GM18951 (cell line): ENCODE measurements at regions of chr2 and their contacts with region 1.

Region 1: DNA sequence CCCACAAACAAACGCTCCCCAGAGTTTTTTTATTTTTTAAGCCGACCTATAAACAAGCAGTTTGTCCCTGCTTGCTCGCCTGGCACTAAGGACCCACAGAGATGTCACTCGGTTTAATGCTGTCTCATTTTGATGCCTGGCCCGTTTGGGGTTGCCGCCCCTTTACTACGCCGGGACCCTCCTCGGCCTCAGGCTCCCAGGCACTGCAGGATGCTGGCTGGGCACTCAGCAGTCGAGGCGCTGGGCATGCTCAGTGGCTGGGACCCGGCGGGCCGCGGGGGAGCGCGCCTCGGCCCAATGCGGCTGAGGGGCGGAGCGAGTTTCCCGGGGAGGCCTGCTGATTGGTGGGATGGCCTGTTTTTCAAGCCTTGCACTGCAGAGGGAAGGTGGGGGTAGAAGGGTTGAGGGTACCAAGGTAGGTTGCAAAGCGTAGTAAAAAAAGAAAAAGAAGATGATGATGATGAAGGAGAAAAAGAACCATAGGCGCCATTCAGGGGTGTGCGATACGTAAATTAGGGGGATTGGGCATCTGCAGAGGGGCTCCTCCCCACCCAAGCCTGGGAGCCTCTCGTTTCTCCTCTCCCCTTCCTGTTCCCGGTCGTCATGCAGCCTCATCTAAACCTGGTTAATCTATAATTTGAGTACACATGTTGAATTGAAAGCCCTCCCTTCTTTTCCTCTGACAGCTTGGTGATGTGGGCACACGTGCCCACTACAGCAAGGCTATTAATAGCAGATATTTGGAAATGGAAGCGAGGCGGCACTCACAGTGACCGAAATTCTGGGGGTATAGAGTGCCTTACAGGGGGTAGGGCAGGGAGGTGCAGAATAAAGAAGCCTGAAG is 1.5 kb upstream of the IRS1 start:
- POLR2A ChIP-seq: peak; percentile 68

Region 2: GRCh38 chr2:225660262-225661131 is 1140.7 kb before region 1 on chr2:
- in situ Hi-C with region 1: loop called (anchors 25 kb)
- POLR2A ChIP-seq: no peak

Region 3: DNA sequence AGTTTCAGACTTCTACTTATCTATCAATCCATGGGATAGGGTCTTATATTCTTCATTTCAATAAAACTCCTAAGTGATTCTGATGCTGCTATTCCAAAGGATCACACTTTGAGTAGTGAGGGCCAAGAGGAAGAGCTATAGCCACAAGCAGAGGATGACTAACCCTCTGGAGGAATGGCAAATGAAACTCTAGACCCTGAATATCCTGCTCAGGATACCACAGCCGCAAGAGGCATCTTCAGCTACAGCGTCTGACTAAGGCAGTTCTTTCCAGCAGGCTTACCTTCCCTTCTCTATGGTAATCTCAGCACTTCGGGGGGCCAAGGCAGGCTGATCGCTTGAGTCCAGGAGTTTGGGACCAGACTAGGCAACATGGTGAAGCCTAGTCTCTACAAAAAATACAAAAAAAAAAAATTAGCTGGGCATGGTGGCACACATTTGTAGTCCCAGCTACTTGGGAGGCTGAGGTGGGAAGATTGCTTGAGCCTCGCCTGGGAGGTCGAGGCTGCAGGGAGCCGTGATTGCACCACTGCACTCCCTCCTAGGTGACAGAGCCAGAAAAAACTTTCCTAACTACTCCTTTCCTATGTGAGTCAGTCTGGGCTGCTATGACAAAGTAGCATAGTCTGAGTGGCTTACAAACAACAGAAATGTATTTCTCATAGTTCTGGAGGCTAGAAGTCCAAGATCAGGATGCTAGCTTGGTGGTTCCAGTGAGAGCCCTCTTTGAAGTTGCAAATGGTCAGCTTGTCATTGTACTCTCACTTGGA is 373.4 kb before region 1 on chr2:
- in situ Hi-C with region 1: no loop called
- POLR2A ChIP-seq: no peak

Region 4: DNA sequence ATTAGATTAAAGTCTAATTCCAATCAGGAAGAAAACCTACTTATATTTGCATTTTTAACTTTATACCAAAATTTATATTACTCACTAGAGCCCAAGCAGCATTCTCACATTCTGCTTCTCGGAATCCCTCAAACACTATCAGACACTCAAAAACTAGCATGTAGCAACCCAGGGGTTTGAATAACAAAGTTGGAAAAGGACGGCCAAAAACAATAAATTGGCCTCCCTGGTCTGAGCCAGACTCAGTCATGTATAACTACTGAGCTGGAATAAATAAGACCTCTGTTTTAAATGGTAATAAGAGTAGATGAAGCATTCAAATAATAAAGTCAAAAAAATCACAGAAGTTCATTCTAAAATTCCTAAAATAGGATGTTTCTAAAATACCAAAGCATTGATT is 292.5 kb before region 1 on chr2:
- in situ Hi-C with region 1: no loop called
- POLR2A ChIP-seq: no peak

Region 5: GRCh38 chr2:227106845-227107759 is 305.9 kb after region 1 on chr2:
- in situ Hi-C with region 1: loop called (anchors 25 kb)
- POLR2A ChIP-seq: no peak